IMR-90 (cell line): ENCODE measurements at regions of chr1 and their contacts with region 1.

Region 1: DNA sequence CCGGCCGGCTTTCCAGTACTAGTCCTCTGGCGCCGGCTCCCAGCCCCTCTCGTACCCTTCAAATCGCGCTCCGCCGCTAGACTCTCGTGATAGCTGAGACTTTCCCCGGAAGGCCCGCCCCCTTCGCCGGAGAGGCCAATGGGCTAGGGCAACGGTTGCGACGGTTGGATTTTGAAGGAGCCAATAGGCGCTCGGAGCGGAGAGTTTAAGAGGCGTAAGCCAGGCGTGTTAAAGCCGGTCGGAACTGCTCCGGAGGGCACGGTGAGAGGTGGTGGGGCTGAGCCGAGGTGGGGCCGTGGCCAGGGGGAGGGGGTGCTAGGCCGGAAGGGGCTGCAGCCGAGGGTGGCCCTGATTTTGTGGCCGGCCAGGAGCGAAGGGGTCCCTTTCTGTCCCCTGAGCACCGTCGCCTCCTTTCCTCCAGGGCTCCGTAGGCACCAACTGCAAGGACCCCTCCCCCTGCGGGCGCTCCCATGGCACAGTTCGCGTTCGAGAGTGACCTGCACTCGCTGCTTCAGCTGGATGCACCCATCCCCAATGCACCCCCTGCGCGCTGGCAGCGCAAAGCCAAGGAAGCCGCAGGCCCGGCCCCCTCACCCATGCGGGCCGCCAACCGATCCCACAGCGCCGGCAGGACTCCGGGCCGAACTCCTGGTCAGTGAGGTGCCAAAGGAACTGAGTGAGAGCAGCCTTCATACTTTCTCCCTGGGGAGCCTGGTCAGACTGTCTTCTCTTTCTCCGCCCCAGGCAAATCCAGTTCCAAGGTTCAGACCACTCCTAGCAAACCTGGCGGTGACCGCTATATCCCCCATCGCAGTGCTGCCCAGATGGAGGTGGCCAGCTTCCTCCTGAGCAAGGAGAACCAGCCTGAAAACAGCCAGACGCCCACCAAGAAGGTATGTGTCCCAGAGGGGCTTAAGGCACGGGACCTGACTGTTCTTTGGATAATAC is at the start of gene CDC20:
- DNase-seq: peak; percentile 92
- ATAC-seq: peak; percentile 96
- H3K4me3 ChIP-seq: peak within 1 kb of the TSS; percentile 75
- H3K27ac ChIP-seq: peak within 1 kb of the TSS; percentile 94
- H3K4me1 ChIP-seq: peaks cover 9% of the 10 kb centered on the region; the same call in 1 of the 2 replicates
- H3K27me3 ChIP-seq: no peaks in the 10 kb centered on the region
- CTCF ChIP-seq: no peak
- POLR2A ChIP-seq: no peak; the same call in 1 of the 2 replicates
- RAD21 ChIP-seq: no peak
- total RNA-seq, gene CDC20: 78.0 and 103 TPM in 2 replicates

Region 2: DNA sequence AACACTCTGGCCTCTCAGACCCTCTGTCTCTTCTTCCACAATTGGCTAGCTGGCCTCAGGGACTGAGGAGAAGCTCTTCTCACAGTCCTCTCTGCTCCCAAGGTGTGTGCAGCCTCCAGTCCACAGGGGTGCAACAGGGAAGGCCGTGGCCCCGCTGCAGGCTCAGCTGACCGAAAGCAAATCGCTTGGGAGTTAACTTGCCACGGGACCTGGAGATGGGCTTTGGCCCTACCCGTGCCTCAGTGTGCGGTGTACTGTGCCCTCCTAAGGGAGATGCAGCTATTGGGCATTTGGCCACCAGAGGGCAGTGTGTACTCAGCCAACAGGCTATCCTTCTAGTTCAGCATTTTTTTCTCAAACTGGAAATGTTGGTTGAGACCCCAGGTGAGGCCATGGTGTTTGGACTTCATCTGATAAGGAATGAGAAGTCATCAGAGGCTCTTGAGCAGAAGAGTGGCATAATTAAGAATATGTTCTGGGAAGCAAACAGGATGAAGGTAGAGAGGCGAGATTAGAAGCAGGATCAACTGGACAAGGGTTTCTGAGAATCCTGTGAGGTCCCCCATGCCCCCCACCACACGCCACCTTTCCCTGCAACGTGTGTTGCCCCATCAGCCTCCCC is 131.8 kb before region 1 on chr1:
- CTCF ChIA-PET with region 1: interaction called, 8 read pairs
- POLR2A ChIA-PET with region 1: interaction called, 3 read pairs
- dilution Hi-C with region 1: no loop called
- in situ Hi-C with region 1: loop called (anchors 10 kb)
- intact Hi-C with region 1: loop called (anchors 1 kb)
- DNase-seq: peak; percentile 70
- ATAC-seq: peak; percentile 81
- H3K4me3 ChIP-seq: no peak overlapping the region
- H3K27ac ChIP-seq: no peak overlapping the region
- H3K4me1 ChIP-seq: peaks cover 18% of the 10 kb centered on the region
- H3K27me3 ChIP-seq: no peaks in the 10 kb centered on the region
- CTCF ChIP-seq: peak; percentile 92
- POLR2A ChIP-seq: 0 out of 2 replicates have a peak, but pooled peaks have one; percentile 45
- RAD21 ChIP-seq: peak; percentile 98

Region 3: DNA sequence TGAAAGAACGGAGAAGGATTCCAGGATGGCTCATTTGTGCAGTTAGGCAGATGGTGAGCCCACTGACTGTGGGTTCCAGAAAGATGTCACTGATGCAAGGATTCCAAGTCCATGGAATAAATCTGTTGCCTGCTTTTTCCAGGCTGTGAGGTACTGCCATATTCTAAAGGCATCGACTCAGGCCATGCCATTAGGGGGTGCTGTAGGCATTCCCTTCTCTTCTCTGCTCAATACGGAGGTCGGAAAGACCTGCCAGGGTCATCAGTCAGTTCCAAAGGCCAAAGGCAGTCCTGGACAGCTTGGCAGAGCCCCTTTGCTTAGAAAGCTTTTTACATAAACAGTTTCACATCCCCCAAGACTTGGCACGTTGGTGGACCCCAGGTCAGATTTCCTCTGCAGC is 120.9 kb before region 1 on chr1:
- CTCF ChIA-PET with region 1: no interaction called
- POLR2A ChIA-PET with region 1: interaction called, 3 read pairs
- dilution Hi-C with region 1: no loop called
- in situ Hi-C with region 1: loop called (anchors 10 kb)
- intact Hi-C with region 1: loop called (anchors 1 kb)
- DNase-seq: peak; percentile 64
- ATAC-seq: peak; percentile 88
- H3K4me3 ChIP-seq: no peak overlapping the region
- H3K27ac ChIP-seq: no peak overlapping the region
- H3K4me1 ChIP-seq: peaks cover 6% of the 10 kb centered on the region; the same call in 1 of the 2 replicates
- H3K27me3 ChIP-seq: no peaks in the 10 kb centered on the region
- CTCF ChIP-seq: peak; percentile 80
- POLR2A ChIP-seq: no peak
- RAD21 ChIP-seq: peak; percentile 89

Region 4: GRCh38 chr1:43554444-43554992 is 195.5 kb after region 1 on chr1:
- CTCF ChIA-PET with region 1: no interaction called
- POLR2A ChIA-PET with region 1: no interaction called
- dilution Hi-C with region 1: no loop called
- in situ Hi-C with region 1: no loop called
- intact Hi-C with region 1: no loop called
- DNase-seq: peak; percentile 50
- ATAC-seq: peak; percentile 40
- H3K4me3 ChIP-seq: no peak overlapping the region
- H3K27ac ChIP-seq: no peak overlapping the region
- H3K4me1 ChIP-seq: peaks cover 12% of the 10 kb centered on the region
- H3K27me3 ChIP-seq: no peaks in the 10 kb centered on the region
- CTCF ChIP-seq: peak; percentile 53
- POLR2A ChIP-seq: no peak
- RAD21 ChIP-seq: peak; percentile 34; the same call in 1 of the 2 replicates